SK-N-SH (cell line): ENCODE measurements at regions of chr3 and their contacts with region 1.

Region 1: GRCh38 chr3:119293871-119294695 is at the start of gene ARHGAP31:
- DNase-seq: peak; percentile 79
- H3K4me3 ChIP-seq: peak within 1 kb of the TSS; percentile 81 to 90
- H3K27ac ChIP-seq: peak within 1 kb of the TSS; percentile 90 to 91
- H3K4me1 ChIP-seq: peaks cover 12 to 48% of the 10 kb centered on the region in 2 experiments; a peak in 3 of 4 replicates
- H3K27me3 ChIP-seq: no peaks in the 10 kb centered on the region
- CTCF ChIP-seq: no peak
- EP300 ChIP-seq: no peak
- RAD21 ChIP-seq: no peak
- polyA plus RNA-seq, gene ARHGAP31: 4.4 and 7.7 TPM in 2 replicates

Region 2: DNA sequence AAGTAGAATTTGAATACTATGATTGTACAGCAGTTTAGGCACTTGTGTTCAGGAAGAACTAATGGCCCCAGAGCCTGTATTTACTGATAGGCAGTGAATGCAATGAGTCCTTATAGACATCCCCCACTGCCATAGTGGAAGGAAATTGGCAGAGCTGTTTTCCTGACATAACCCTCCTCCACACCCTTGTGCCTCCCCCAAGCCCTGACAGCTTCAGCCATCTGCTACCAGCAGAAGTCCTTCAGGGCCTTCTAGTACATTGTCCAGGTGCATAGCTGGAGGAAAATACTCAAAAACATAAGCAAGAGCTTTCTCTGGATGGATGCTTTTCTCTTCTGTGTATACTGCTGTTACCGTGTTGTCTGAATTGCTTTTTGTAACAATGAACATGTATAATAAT is 20.7 kb after region 1 on chr3:
- CTCF ChIA-PET with region 1: interaction called, 4 read pairs
- POLR2A ChIA-PET with region 1: interaction called, 11 read pairs
- DNase-seq: peak; percentile 41
- H3K4me3 ChIP-seq: no peak overlapping the region
- H3K27ac ChIP-seq: peak overlapping the region in 1 of 2 experiments; percentile 85; a peak in 1 of 4 replicates
- H3K4me1 ChIP-seq: peaks cover 20 to 52% of the 10 kb centered on the region in 2 experiments
- H3K27me3 ChIP-seq: no peaks in the 10 kb centered on the region
- CTCF ChIP-seq: no peak
- EP300 ChIP-seq: peak in 1 of 2 experiments; percentile 67; a peak in 1 of 4 replicates
- RAD21 ChIP-seq: no peak

Region 3: GRCh38 chr3:119322835-119323722 is 29.0 kb after region 1 on chr3:
- CTCF ChIA-PET with region 1: interaction called, 3 read pairs
- POLR2A ChIA-PET with region 1: interaction called, 24 read pairs
- DNase-seq: peak; percentile 89
- H3K4me3 ChIP-seq: peak overlapping the region; percentile 48 to 49
- H3K27ac ChIP-seq: peak overlapping the region; percentile 83 to 92
- H3K4me1 ChIP-seq: peaks cover 7 to 25% of the 10 kb centered on the region in 2 experiments; a peak in 3 of 4 replicates
- H3K27me3 ChIP-seq: no peaks in the 10 kb centered on the region
- CTCF ChIP-seq: no peak
- EP300 ChIP-seq: no peak
- RAD21 ChIP-seq: peak; percentile 20; the same call in 1 of the 2 replicates

Region 4: DNA sequence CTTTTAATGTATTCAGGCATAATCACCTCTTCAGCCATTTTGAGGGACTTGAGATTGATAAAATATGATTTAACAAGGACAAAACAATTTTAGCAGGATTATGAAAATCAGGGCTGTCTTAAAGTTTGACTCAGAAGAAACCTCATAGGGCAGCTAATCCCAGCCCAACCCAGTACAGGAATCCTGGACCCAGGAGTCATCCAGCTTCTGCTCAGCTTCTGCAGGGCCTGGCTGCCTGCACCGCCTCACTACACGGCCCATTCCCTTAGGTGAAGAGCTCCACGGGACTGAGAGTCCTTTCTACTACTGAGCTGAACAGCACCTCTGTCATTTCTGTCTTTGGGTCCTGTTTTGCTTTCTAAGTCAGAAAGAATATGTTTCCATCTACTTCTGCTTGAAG is 37.6 kb after region 1 on chr3:
- CTCF ChIA-PET with region 1: interaction called, 8 read pairs
- POLR2A ChIA-PET with region 1: interaction called, 44 read pairs
- DNase-seq: no peak
- H3K4me3 ChIP-seq: no peak overlapping the region
- H3K27ac ChIP-seq: peak overlapping the region; percentile 28 to 95; a peak in 2 of 4 replicates
- H3K4me1 ChIP-seq: peaks cover 4 to 50% of the 10 kb centered on the region in 2 experiments; a peak in 2 of 4 replicates
- H3K27me3 ChIP-seq: no peaks in the 10 kb centered on the region
- CTCF ChIP-seq: no peak
- EP300 ChIP-seq: no peak
- RAD21 ChIP-seq: no peak